Activated CD4-positive, alpha-beta memory T cell treated with anti-CD3 and anti-CD28 coated beads, Interleukin-2, amount 10 ng/mL, durations not matched to agents 7 days and 5 days (primary cell): ENCODE measurements at regions of chr12 and their contacts with region 1.

Region 1: DNA sequence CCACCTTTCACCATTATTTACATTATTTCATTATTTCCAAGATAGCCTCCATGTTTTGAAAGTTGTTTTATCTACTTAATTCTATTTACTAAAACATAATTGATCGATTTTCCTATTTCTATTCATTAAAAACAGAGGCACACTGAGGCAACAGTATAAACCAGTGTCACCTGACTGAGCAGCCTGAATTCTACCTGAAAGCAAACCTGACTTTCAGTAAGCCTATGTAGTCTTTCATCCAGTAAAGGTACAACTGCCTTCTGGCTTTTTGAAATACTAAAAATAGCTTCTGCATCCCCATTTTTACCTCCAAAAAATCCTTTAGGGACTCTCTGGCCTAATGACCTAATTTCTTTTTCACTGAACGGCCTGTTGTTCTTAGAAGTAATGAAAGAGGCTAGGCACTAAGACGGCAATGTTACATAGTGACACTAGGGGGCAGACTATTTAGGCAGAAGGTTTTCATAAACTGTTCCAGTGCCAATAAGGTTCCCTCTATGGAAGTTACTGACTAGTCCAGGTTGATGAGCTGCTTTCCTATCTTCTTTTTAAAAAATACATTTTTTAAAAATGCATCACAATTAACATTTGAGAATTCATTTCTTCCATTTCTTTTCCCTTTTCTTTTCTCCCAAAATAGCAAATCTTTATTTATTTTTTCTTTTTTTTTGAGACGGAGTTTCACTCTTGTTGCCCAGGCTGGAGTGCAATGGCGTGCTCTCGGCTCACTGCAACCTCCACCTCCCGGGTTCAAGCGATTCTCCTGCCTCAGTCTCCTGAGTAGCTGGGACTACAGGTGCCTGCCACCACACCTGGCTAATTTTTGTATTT is 17.5 kb downstream of the ANAPC5 start:
- DNase-seq: no peak
- H3K4me3 Mint-ChIP-seq: no peak overlapping the region
- H3K27ac Mint-ChIP-seq: peak overlapping the region; percentile 49
- H3K4me1 Mint-ChIP-seq: peaks cover 6% of the 10 kb centered on the region
- H3K27me3 Mint-ChIP-seq: no peaks in the 10 kb centered on the region

Region 2: DNA sequence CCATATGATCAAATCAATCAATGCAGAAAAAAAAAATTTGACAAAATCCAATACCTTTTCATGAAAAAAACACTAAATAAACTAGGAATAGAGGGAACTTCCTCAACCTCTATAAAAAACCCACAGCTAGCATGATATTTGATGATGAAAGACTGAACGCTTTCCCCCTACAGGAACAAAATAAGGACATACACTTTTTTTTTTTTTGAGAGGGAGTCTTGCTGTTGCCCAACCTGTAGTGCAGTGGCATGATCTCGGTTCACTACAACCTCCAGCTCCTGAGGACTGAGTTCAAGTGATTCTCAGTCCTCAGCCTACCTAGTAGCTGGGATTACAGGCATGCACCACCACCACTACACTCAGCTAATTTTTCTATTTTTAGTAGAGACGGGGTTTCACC is 20.3 kb before region 1 on chr12:
- CTCF ChIA-PET with region 1: interaction called, 10 read pairs
- POLR2A ChIA-PET with region 1: no interaction called
- DNase-seq: no peak
- H3K4me3 Mint-ChIP-seq: no peak overlapping the region
- H3K27ac Mint-ChIP-seq: no peak overlapping the region
- H3K4me1 Mint-ChIP-seq: peaks cover 28% of the 10 kb centered on the region
- H3K27me3 Mint-ChIP-seq: no peaks in the 10 kb centered on the region

Region 3: GRCh38 chr12:121346747-121347146 is 12.0 kb after region 1 on chr12:
- CTCF ChIA-PET with region 1: interaction called, 17 read pairs
- POLR2A ChIA-PET with region 1: interaction called, 17 read pairs
- DNase-seq: no peak
- H3K4me3 Mint-ChIP-seq: no peak overlapping the region
- H3K27ac Mint-ChIP-seq: no peak overlapping the region
- H3K4me1 Mint-ChIP-seq: peaks cover 41% of the 10 kb centered on the region
- H3K27me3 Mint-ChIP-seq: no peaks in the 10 kb centered on the region